ENCODE measurements at regions of chr3 and their contacts with region 1.

Region 1: GRCh38 chr3:43621656-43622432 is at the start of gene ANO10:
- DNase-seq: peak; percentile 99
- H3K4me3 ChIP-seq: peak within 1 kb of the TSS; percentile 87
- H3K27ac ChIP-seq: peak within 1 kb of the TSS; percentile 73
- H3K27me3 ChIP-seq: no peaks in the 10 kb centered on the region
- CTCF ChIP-seq: no peak
- polyA plus RNA-seq, gene ANO10: 71.9 and 87.1 TPM in 2 replicates

Region 2: DNA sequence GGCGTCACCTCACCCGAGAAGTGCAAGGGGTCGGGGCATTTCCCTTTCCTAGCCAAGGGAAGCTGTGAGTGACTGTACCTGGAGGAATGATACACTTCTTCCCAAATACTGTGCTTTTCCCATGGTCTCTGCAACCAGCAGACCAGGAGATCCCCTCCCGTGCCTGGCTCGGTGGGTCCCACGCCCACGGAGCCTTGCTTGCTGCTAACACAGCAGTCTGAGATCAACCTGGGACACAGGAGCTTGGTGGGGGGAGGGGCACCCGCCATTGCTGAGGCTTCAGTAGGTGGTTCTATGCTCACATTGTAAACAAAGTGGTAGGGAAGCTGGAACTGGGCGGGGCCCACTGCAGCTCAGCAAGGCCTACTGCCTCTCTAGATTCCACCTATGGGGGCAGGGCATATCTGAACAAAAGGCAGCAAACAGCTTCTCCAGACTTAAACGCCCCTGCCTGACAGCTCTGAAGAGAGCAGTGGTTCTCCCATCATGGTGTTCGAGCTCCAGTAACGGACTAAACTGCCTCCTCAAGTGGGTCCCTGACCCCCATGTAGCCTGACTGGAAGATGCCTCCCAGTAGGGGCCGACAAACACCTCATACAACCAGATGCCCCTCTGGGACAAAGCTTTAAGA is 37.5 kb after region 1 on chr3:
- CTCF ChIA-PET with region 1: no interaction called
- POLR2A ChIA-PET with region 1: no interaction called
- DNase-seq: no peak
- H3K4me3 ChIP-seq: no peak overlapping the region
- H3K27ac ChIP-seq: no peak overlapping the region
- H3K27me3 ChIP-seq: no peaks in the 10 kb centered on the region
- CTCF ChIP-seq: no peak

Region 3: DNA sequence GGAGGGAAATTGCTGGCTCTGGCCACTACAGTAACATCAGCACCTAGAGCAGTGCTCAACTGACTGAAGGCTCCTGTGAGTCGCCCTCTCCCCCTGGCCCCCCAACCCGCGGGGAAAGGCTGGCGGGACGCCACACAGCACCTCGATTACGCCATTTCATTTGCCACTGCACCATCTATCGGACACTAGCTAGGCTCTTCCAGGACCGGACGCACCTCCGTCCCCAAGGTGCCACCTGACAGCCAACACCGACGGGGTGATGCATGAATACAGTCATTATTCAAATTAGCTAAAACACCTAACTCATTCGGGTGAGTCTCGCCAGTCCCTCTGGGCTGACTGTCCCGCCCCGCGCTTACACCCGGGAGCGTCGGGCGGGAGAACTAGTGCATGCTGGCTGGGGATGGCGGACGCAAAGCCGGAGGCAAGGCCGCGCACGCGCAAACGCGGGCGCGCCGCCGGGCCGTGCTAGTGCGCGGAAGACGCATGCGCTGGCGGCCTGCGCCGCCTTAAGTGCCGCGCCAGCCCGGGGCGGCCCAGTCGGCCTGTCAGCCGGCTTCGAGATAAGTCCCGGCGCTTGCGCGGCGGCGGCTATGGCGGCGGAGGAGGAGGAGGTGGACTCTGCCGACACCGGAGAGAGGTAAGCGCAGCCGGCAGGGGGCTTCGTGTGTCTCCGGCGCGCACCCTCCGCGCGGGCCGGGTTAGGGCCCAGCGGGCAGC is 68.7 kb after region 1 on chr3 and contains the start of gene ABHD5:
- CTCF ChIA-PET with region 1: no interaction called
- POLR2A ChIA-PET with region 1: interaction called, 12 read pairs
- DNase-seq: peak; percentile 85
- H3K4me3 ChIP-seq: peak within 1 kb of the TSS; percentile 85
- H3K27ac ChIP-seq: no peak within 1 kb of the TSS
- H3K27me3 ChIP-seq: no peaks in the 10 kb centered on the region
- CTCF ChIP-seq: peak; percentile 39
- polyA plus RNA-seq, gene ABHD5: 63.5 and 88.7 TPM in 2 replicates

Measured in AG04450 (cell line).